T-cell (primary cell): ENCODE measurements at regions of chr1 and their contacts with region 1.

Region 1: DNA sequence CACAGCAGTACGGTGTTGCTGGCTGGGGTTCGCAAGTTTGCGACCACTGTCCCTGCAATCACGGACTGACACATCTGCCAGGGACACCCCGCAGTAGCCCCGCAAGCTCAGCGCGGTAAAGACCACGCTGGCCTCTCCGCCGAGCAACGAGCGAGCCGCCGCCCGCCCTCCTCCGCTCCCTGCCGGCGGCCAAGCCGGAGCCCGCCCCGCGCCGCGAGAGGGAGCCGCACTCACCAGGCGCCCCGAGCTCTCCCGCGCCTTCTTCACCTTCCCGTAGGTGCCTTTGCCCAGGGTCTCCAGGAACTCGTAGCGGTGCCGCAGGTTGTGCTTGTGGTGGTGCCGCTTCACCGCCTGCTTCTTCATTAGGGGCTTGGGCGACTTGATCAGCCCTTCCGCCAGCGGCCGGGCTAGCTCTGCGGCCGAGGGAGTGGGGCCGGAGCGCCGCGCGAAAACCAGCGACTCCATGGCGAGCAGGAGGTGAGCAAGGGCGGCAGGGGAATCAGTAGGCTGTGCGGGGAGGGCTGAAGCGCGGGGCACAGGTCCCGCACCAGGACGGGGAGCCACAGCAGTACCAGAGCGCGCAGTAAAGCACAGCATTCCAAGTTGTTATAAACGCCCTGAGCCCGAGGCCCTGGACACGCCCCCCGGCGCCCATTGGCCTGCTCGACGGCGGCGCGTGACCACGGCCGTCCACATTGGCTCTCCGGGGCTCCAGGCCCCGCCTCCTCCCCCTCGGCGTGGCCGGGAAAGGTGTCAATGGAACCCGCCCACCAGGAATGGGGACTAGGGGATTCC is at the start of gene NUAK2:
- DNase-seq: peak; percentile 66 to 90 (median 80)
- ATAC-seq: peak; percentile 90 to 93 (median 90)
- H3K4me3 ChIP-seq: peak within 1 kb of the TSS; percentile 97 to 100
- H3K4me3 Mint-ChIP-seq: peak within 1 kb of the TSS; percentile 95 to 99 (median 98)
- H3K27ac ChIP-seq: peak within 1 kb of the TSS; percentile 50
- H3K27ac Mint-ChIP-seq: peak within 1 kb of the TSS; percentile 93
- H3K4me1 ChIP-seq: peaks cover 30 to 76% of the 10 kb centered on the region in 2 experiments
- H3K4me1 Mint-ChIP-seq: peaks cover 60 to 90% (median 73%) of the 10 kb centered on the region in 3 donors
- H3K27me3 ChIP-seq: peaks cover 0 to 6% of the 10 kb centered on the region in 2 experiments
- H3K27me3 Mint-ChIP-seq: no peaks in the 10 kb centered on the region
- total RNA-seq, gene NUAK2: 15.0 to 38.7 (median 32.7) TPM

Region 2: GRCh38 chr1:205284343-205285144 is 36.8 kb before region 1 on chr1:
- CTCF ChIA-PET with region 1: interaction called, 6 to 60 read pairs
- POLR2A ChIA-PET with region 1: interaction called, 4 to 11 read pairs
- DNase-seq: peak; percentile 80 to 94 (median 88)
- ATAC-seq: peak; percentile 70 to 77 (median 76)
- H3K4me3 ChIP-seq: peak overlapping the region; percentile 34 to 60
- H3K4me3 Mint-ChIP-seq: peak overlapping the region; percentile 72 to 90 (median 78)
- H3K27ac ChIP-seq: peak overlapping the region; percentile 86
- H3K27ac Mint-ChIP-seq: peak overlapping the region; percentile 94 to 95
- H3K4me1 ChIP-seq: peaks cover 57 to 88% of the 10 kb centered on the region in 2 experiments
- H3K4me1 Mint-ChIP-seq: peaks cover 82 to 92% (median 87%) of the 10 kb centered on the region in 3 donors
- H3K27me3 ChIP-seq: no peaks in the 10 kb centered on the region
- H3K27me3 Mint-ChIP-seq: no peaks in the 10 kb centered on the region

Region 3: GRCh38 chr1:205300886-205301821 is 20.2 kb before region 1 on chr1:
- CTCF ChIA-PET with region 1: interaction called, 3 to 10 read pairs
- POLR2A ChIA-PET with region 1: no interaction called
- DNase-seq: no peak
- ATAC-seq: no peak
- H3K4me3 ChIP-seq: no peak overlapping the region
- H3K4me3 Mint-ChIP-seq: no peak overlapping the region
- H3K27ac ChIP-seq: no peak overlapping the region
- H3K27ac Mint-ChIP-seq: peak overlapping the region; percentile 64 to 75
- H3K4me1 ChIP-seq: peaks cover 0 to 41% of the 10 kb centered on the region in 2 experiments
- H3K4me1 Mint-ChIP-seq: peaks cover 55 to 69% (median 63%) of the 10 kb centered on the region in 3 donors
- H3K27me3 ChIP-seq: no peaks in the 10 kb centered on the region
- H3K27me3 Mint-ChIP-seq: no peaks in the 10 kb centered on the region

Region 4: DNA sequence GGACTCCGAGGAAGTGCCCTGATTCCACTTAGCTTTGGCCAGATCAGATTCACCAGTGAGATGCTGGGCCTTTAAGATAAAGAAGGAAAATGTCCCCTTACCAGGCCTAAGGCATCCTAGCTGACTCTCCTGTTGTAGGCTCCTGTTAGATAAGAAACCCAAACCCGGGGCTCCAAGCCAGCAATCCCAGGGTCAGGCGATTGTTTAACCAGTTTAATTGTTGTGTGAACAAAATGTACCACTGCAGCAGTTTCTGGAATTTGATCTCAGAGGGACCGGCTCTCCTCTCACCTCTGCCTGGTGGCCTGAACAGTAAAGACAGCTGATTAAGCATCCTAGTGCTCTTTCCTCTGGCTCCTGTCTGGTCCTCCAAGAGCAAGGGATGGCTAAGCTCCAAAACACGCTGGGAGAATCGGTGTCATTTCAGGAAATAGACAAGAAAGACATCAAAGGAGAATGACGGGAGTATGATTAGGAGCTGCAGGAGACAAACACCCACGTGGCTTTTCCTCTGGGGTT is 44.6 kb after region 1 on chr1:
- CTCF ChIA-PET with region 1: no interaction called
- POLR2A ChIA-PET with region 1: no interaction called
- DNase-seq: no peak
- ATAC-seq: no peak
- H3K4me3 ChIP-seq: no peak overlapping the region
- H3K4me3 Mint-ChIP-seq: no peak overlapping the region
- H3K27ac ChIP-seq: no peak overlapping the region
- H3K27ac Mint-ChIP-seq: no peak overlapping the region
- H3K4me1 ChIP-seq: no peaks in the 10 kb centered on the region
- H3K4me1 Mint-ChIP-seq: no peaks in the 10 kb centered on the region
- H3K27me3 ChIP-seq: peaks cover 0 to 17% of the 10 kb centered on the region in 2 experiments
- H3K27me3 Mint-ChIP-seq: peaks cover 3 to 14% of the 10 kb centered on the region in 2 donors

Region 5: DNA sequence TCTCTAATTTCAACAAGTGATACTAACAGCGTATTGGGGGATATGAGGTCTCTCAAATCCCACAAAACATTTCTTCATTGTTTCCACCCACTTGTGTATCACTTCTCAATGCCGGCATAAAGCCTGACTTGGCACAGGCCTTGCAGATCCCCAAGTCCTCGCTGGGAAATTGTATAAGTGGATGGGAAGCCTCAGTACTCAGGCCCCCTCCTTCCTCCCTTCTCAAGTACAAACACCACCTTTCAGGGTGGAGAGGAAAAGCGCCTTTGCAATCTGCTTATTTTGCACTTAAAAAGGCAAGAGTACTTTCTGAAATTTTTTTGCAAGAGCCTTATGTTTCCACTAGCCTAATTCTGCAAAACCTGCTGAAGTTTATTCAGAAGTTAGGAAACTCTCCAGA is 61.2 kb after region 1 on chr1:
- CTCF ChIA-PET with region 1: no interaction called
- POLR2A ChIA-PET with region 1: no interaction called
- DNase-seq: no peak
- ATAC-seq: no peak
- H3K4me3 ChIP-seq: no peak overlapping the region
- H3K4me3 Mint-ChIP-seq: no peak overlapping the region
- H3K27ac ChIP-seq: no peak overlapping the region
- H3K27ac Mint-ChIP-seq: no peak overlapping the region
- H3K4me1 ChIP-seq: no peaks in the 10 kb centered on the region
- H3K4me1 Mint-ChIP-seq: no peaks in the 10 kb centered on the region
- H3K27me3 ChIP-seq: peaks cover 0 to 12% of the 10 kb centered on the region in 2 experiments
- H3K27me3 Mint-ChIP-seq: peaks cover 21 to 27% of the 10 kb centered on the region in 2 donors